ENCODE measurements at regions of chr10 and their contacts with region 1.

Region 1: DNA sequence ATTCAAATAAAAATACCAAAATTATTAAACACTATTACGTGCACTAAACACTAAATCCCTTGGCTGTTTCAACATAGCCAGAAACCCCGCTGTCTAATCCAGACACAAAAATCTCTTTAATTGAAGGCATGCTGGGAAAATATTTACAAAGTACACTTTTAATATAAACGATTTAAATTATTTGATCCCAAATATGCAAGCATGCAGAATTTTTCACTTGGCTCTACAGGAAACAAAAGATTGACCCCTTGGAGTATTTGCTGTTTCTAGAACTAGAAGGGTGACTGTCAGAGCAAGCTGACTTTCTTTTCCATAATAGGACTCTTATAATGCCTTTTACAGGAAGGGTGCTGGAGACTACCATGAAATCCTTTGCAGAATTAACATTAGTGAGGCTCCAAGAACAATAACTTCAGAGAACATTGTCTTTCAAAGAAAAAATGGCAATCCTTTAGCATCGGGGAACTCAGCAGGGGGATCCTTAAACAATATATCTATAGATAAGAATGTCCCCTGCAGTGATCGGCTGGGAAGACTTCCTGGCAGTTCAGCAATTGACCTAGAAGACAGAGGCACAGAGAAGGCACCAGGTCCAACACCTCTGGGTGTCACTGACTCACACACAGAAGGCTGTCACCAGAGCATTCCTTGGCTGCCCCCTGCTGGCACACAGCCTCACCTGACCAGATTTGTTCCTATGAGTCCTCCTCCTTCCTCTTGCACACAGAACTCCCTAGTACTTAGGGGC is 55.8 kb upstream of the MRLN start:
- DNase-seq: peak; percentile 68 to 87 (median 81)
- ATAC-seq: peak; percentile 45 to 82 (median 76)
- H3K4me3 ChIP-seq: no peak overlapping the region
- H3K27ac ChIP-seq: peak overlapping the region in 3 of 12 donors; percentile 30 to 51 (median 32)
- H3K4me1 ChIP-seq: peaks cover 0 to 20% (median 2%) of the 10 kb centered on the region in 12 donors
- H3K27me3 ChIP-seq: no peaks in the 10 kb centered on the region
- CTCF ChIP-seq: peak; percentile 50 to 75 (median 64)
- POLR2A ChIP-seq: no peak

Region 2: DNA sequence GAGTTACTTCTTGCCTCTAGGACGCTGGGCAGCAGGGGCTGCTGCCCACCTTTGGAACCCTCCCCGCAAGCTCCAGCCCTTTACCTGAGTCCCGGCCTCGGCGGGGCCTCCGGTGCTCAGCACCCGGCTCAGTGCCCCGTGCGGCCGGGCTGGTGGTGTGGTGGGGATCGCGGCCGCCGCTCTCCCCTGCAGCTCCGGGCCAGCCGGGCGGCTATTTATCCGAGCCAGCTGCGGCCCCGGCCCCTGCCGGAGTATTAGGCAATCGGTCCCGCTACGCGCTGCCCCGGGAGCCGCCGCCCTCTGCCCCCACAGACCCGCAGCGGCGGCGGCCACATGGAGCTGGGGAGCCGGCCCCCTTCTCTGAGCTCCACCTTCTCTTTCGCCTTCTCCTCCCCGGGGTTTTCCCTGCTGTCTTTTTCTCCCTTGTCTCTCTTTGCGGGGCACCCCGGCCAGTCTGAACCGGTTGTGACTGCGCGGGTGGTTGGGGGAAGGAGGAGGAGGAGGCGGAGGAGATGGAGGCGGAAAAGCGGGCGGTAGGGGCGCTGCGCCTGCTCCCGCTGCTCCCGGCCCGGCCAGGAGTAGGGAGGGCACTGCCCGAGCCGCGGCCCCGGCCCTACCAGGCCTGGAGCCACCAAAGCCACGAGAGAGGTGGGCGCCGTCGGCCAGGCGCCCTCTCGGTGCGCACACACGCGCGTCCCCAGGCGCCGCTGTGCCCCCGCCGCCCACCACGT is 99.5 kb before region 1 on chr10 and contains the start of gene SLC16A9:
- intact Hi-C with region 1: loop called in 1 of 10 experiments (anchors 5 kb)
- DNase-seq: peak; percentile 54 to 63 (median 62)
- ATAC-seq: peak; percentile 81 to 95 (median 94)
- H3K4me3 ChIP-seq: peak within 1 kb of the TSS; percentile 26 to 86 (median 67)
- H3K27ac ChIP-seq: peak within 1 kb of the TSS in 9 of 12 donors; percentile 36 to 82 (median 62)
- H3K4me1 ChIP-seq: peaks cover 0 to 13% (median 3%) of the 10 kb centered on the region in 12 donors
- H3K27me3 ChIP-seq: peaks cover 0 to 17% (median 0%) of the 10 kb centered on the region in 9 donors
- CTCF ChIP-seq: peak in 9 of 12 donors; percentile 12 to 60 (median 30)
- POLR2A ChIP-seq: no peak
- total RNA-seq, gene SLC16A9: 0.23 to 3.0 (median 0.83) TPM